Psoas muscle (tissue), 8 donors: ENCODE measurements at regions of chr15 and their contacts with region 1.

Region 1: GRCh38 chr15:41416742-41417406 is at the start of gene RTF1:
- DNase-seq: peak; percentile 95 to 98
- ATAC-seq: peak; percentile 97 to 98 (median 98)
- H3K4me3 ChIP-seq: peak within 1 kb of the TSS; percentile 100
- H3K27ac ChIP-seq: peak within 1 kb of the TSS; percentile 90
- H3K4me1 ChIP-seq: peaks cover 27% of the 10 kb centered on the region
- H3K27me3 ChIP-seq: no peaks in the 10 kb centered on the region
- CTCF ChIP-seq: no peak
- total RNA-seq, gene RTF1: 27.0 to 40.3 (median 32.2) TPM

Region 2: GRCh38 chr15:41367418-41367817 is 49.5 kb before region 1 on chr15:
- intact Hi-C with region 1: no loop called
- DNase-seq: no peak
- ATAC-seq: peak; percentile 46 to 81 (median 65)
- H3K4me3 ChIP-seq: no peak overlapping the region
- H3K27ac ChIP-seq: no peak overlapping the region
- H3K4me1 ChIP-seq: peaks cover 3% of the 10 kb centered on the region
- H3K27me3 ChIP-seq: no peaks in the 10 kb centered on the region
- CTCF ChIP-seq: no peak

Region 3: GRCh38 chr15:41443275-41443674 is 26.4 kb after region 1 on chr15:
- intact Hi-C with region 1: loop called in 1 of 2 experiments (anchors 1 kb)
- DNase-seq: no peak
- ATAC-seq: no peak
- H3K4me3 ChIP-seq: no peak overlapping the region
- H3K27ac ChIP-seq: no peak overlapping the region
- H3K4me1 ChIP-seq: no peaks in the 10 kb centered on the region
- H3K27me3 ChIP-seq: no peaks in the 10 kb centered on the region
- CTCF ChIP-seq: no peak

Region 4: GRCh38 chr15:41648770-41649169 is 231.9 kb after region 1 on chr15:
- intact Hi-C with region 1: no loop called
- DNase-seq: no peak
- ATAC-seq: no peak
- H3K4me3 ChIP-seq: no peak overlapping the region
- H3K27ac ChIP-seq: no peak overlapping the region
- H3K4me1 ChIP-seq: peaks cover 10% of the 10 kb centered on the region
- H3K27me3 ChIP-seq: no peaks in the 10 kb centered on the region
- CTCF ChIP-seq: no peak